ENCODE measurements at regions of chr1 and their contacts with region 1.

Region 1: GRCh38 chr1:85576642-85577418 is 3.7 kb upstream of the CCN1 start:
- DNase-seq: peak; percentile 75 to 82 (median 76)
- ATAC-seq: peak; percentile 85
- H3K4me3 ChIP-seq: peak overlapping the region; percentile 64
- H3K27ac ChIP-seq: peak overlapping the region; percentile 68
- H3K4me1 ChIP-seq: peaks cover 5 to 33% of the 10 kb centered on the region in 2 experiments; a peak in 4 of 5 replicates
- H3K27me3 ChIP-seq: no peaks in the 10 kb centered on the region
- CTCF ChIP-seq: peak; percentile 59 to 78 (median 67)
- EP300 ChIP-seq: no peak
- POLR2A ChIP-seq: peak; percentile 62; the same call in 1 of the 2 replicates
- RAD21 ChIP-seq: 0 out of 4 replicates have a peak, but pooled peaks of 1 of the 2 experiments have one; percentile 26

Region 2: DNA sequence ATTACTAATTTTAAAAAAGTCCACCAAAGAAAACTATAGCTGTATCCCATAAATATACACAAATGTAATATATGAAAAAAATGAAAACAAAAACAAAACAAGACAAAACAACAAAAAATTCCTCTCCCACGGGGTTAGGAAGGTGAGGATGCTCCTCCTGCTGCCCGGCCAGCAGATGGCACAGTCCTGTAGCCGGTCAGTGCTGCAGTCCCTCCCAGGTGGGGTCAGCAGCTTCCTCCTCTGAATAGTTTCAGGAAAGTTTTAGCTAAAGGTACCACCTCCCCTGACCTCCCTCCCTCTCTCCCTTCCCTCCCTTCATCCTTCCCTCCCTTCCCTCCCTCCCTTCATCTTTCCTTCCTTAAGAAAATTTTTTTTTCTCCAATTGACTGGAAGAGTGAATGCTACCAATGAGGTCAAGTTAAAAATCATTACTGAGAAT is 232.6 kb before region 1 on chr1:
- CTCF ChIA-PET with region 1: no interaction called
- POLR2A ChIA-PET with region 1: no interaction called
- in situ Hi-C with region 1: no loop called
- intact Hi-C with region 1: loop called (anchors 10 kb)
- DNase-seq: peak in 2 of 4 experiments; percentile 35 to 57
- ATAC-seq: peak; percentile 98
- H3K4me3 ChIP-seq: no peak overlapping the region
- H3K27ac ChIP-seq: no peak overlapping the region
- H3K4me1 ChIP-seq: no peaks in the 10 kb centered on the region
- H3K27me3 ChIP-seq: no peaks in the 10 kb centered on the region
- CTCF ChIP-seq: peak; percentile 69 to 72 (median 72)
- EP300 ChIP-seq: no peak
- POLR2A ChIP-seq: no peak
- RAD21 ChIP-seq: peak; percentile 44 to 67

Region 3: DNA sequence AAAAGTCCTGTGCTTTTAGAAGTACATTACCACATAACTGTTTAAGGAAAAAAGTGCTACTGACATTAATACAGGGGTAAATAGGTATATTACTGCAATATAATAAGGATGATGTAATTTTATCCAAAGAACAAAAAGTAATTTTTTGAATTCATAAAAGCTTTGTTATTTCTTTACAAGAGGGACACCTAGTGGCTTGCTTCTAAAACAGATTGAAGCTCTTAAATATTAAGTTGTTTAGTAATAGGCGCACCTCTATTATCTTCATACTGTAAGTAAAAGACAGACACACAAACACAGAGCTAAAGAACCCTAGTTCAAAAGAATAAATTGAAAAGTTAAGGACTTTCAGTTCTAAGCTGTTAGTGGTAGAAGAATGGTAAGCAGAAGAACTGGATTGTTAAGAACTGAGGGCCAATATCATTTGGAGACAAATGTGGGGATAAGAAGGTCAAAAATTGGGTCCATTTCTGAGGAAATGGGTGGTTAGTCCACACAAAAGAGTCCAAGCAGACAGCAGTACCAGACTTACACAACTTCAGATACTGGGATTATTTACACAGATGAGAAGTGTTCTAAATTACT is 116.0 kb after region 1 on chr1:
- CTCF ChIA-PET with region 1: no interaction called
- POLR2A ChIA-PET with region 1: no interaction called
- in situ Hi-C with region 1: no loop called
- intact Hi-C with region 1: loop called (anchors 5 kb)
- DNase-seq: peak in 1 of 4 experiments; percentile 6
- ATAC-seq: peak; percentile 37; the same call in 1 of the 3 replicates
- H3K4me3 ChIP-seq: no peak overlapping the region
- H3K27ac ChIP-seq: no peak overlapping the region
- H3K4me1 ChIP-seq: no peaks in the 10 kb centered on the region; a peak in 1 of 5 replicates
- H3K27me3 ChIP-seq: no peaks in the 10 kb centered on the region
- CTCF ChIP-seq: peak in 1 of 3 experiments; percentile 50; a peak in 2 of 6 replicates
- EP300 ChIP-seq: no peak
- POLR2A ChIP-seq: no peak
- RAD21 ChIP-seq: peak; percentile 35 to 53

Region 4: GRCh38 chr1:85707990-85708828 is 131.4 kb after region 1 on chr1 and contains the start of gene ZNHIT6:
- CTCF ChIA-PET with region 1: no interaction called
- POLR2A ChIA-PET with region 1: interaction called, 6 read pairs
- in situ Hi-C with region 1: no loop called
- intact Hi-C with region 1: loop called (anchors 1 kb)
- DNase-seq: peak; percentile 86 to 96 (median 90)
- ATAC-seq: peak; percentile 99
- H3K4me3 ChIP-seq: peak within 1 kb of the TSS; percentile 83
- H3K27ac ChIP-seq: peak within 1 kb of the TSS; percentile 86
- H3K4me1 ChIP-seq: peaks cover 0 to 14% of the 10 kb centered on the region in 2 experiments; a peak in 2 of 5 replicates
- H3K27me3 ChIP-seq: no peaks in the 10 kb centered on the region
- CTCF ChIP-seq: peak; percentile 46 to 70 (median 63)
- EP300 ChIP-seq: peak; percentile 32
- POLR2A ChIP-seq: peak; percentile 92
- RAD21 ChIP-seq: no peak
- polyA plus RNA-seq, gene ZNHIT6: 15.4 to 21.7 TPM

Measured in K562 (cell line).